B cell (primary cell): ENCODE measurements at regions of chrX and their contacts with region 1.

Region 1: GRCh38 chrX:100768679-100769338 is 36.9 kb upstream of the SYTL4 start:
- DNase-seq: peak; percentile 80
- ATAC-seq: peak; percentile 100
- H3K4me3 ChIP-seq: no peak overlapping the region
- H3K4me3 Mint-ChIP-seq: no peak overlapping the region
- H3K27ac ChIP-seq: no peak overlapping the region
- H3K27ac Mint-ChIP-seq: no peak overlapping the region
- H3K4me1 ChIP-seq: no peaks in the 10 kb centered on the region
- H3K4me1 Mint-ChIP-seq: no peaks in the 10 kb centered on the region
- H3K27me3 ChIP-seq: peaks cover 0 to 2% (median 0%) of the 10 kb centered on the region in 4 experiments
- H3K27me3 Mint-ChIP-seq: peaks cover 9% of the 10 kb centered on the region
- CTCF ChIP-seq: peak; percentile 96

Region 2: GRCh38 chrX:99777912-99778311 is 990.9 kb before region 1 on chrX:
- CTCF ChIA-PET with region 1: no interaction called
- POLR2A ChIA-PET with region 1: no interaction called
- intact Hi-C with region 1: no loop called
- DNase-seq: no peak
- ATAC-seq: no peak
- H3K4me3 ChIP-seq: no peak overlapping the region
- H3K4me3 Mint-ChIP-seq: no peak overlapping the region
- H3K27ac ChIP-seq: no peak overlapping the region
- H3K27ac Mint-ChIP-seq: no peak overlapping the region
- H3K4me1 ChIP-seq: no peaks in the 10 kb centered on the region
- H3K4me1 Mint-ChIP-seq: no peaks in the 10 kb centered on the region
- H3K27me3 ChIP-seq: no peaks in the 10 kb centered on the region
- H3K27me3 Mint-ChIP-seq: no peaks in the 10 kb centered on the region
- CTCF ChIP-seq: no peak

Region 3: DNA sequence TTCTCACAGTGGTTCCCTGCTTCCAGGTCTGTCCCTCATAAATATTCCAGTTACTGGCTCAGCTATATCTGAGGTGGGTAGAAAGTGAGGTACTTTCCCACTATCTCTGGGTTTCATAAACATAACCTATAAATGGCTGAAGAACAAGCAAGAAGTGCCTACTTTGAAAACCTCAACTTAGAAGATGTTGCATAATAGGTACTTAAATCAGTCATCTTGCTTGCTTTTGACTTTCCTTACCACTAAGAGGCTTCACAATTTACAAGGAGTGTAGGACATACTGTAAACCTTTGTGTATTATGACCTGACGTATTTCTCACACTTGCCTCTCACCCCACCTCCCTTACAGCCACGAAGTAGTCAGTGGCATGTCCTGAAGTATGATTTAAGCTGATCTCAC is 504.6 kb before region 1 on chrX:
- CTCF ChIA-PET with region 1: no interaction called
- POLR2A ChIA-PET with region 1: no interaction called
- intact Hi-C with region 1: no loop called
- DNase-seq: no peak
- ATAC-seq: no peak
- H3K4me3 ChIP-seq: no peak overlapping the region
- H3K4me3 Mint-ChIP-seq: no peak overlapping the region
- H3K27ac ChIP-seq: no peak overlapping the region
- H3K27ac Mint-ChIP-seq: no peak overlapping the region
- H3K4me1 ChIP-seq: no peaks in the 10 kb centered on the region
- H3K4me1 Mint-ChIP-seq: no peaks in the 10 kb centered on the region
- H3K27me3 ChIP-seq: no peaks in the 10 kb centered on the region
- H3K27me3 Mint-ChIP-seq: no peaks in the 10 kb centered on the region
- CTCF ChIP-seq: no peak

Region 4: DNA sequence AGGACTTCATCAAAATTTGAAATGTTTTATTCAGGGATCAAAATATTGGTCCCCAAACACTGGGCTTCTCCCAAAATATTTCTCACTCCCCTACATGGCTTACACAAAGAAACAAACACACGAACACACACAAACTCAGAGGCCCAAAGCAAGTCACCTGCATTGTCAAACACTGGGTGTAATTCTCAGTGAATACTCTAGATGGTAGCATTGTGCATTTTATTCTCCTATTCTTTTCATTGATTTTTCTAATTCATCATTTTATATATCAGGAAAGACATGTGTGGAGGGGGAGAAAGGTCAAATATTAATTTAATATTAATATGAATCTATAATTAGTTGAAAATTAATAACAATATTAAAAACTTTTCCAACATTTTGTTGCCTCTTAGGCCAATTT is 256.3 kb before region 1 on chrX:
- CTCF ChIA-PET with region 1: interaction called, 24 read pairs
- POLR2A ChIA-PET with region 1: no interaction called
- intact Hi-C with region 1: no loop called
- DNase-seq: peak; percentile 31
- ATAC-seq: no peak
- H3K4me3 ChIP-seq: no peak overlapping the region
- H3K4me3 Mint-ChIP-seq: no peak overlapping the region
- H3K27ac ChIP-seq: no peak overlapping the region
- H3K27ac Mint-ChIP-seq: no peak overlapping the region
- H3K4me1 ChIP-seq: no peaks in the 10 kb centered on the region
- H3K4me1 Mint-ChIP-seq: no peaks in the 10 kb centered on the region
- H3K27me3 ChIP-seq: no peaks in the 10 kb centered on the region
- H3K27me3 Mint-ChIP-seq: peaks cover 3% of the 10 kb centered on the region
- CTCF ChIP-seq: peak; percentile 82

Region 5: GRCh38 chrX:100674705-100675104 is 94.1 kb before region 1 on chrX:
- CTCF ChIA-PET with region 1: interaction called, 60 read pairs
- POLR2A ChIA-PET with region 1: no interaction called
- intact Hi-C with region 1: no loop called
- DNase-seq: peak; percentile 29
- ATAC-seq: peak; percentile 33
- H3K4me3 ChIP-seq: no peak overlapping the region
- H3K4me3 Mint-ChIP-seq: no peak overlapping the region
- H3K27ac ChIP-seq: no peak overlapping the region
- H3K27ac Mint-ChIP-seq: no peak overlapping the region
- H3K4me1 ChIP-seq: peaks cover 16% of the 10 kb centered on the region in 2 donors
- H3K4me1 Mint-ChIP-seq: peaks cover 13% of the 10 kb centered on the region
- H3K27me3 ChIP-seq: peaks cover 0 to 2% (median 0%) of the 10 kb centered on the region in 4 experiments
- H3K27me3 Mint-ChIP-seq: no peaks in the 10 kb centered on the region
- CTCF ChIP-seq: no peak

Region 6: DNA sequence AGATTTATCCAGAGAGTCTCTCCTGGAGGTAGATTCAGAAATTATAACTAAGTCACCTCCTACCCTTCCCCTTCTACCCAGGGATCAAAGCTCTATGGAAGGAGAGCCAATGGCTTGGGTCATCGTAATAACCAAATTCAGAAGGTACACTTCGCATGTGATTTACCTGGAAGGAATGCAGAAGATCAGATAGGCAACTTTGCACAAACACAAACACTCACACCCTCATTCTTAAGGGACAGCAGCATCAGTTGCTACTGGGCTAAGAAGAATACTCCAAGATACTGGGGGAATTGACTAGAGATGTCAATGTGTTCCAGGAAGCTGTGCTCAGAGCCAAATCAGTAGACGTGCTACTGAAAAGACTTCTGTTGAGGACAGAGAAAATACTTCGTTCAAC is 78.2 kb before region 1 on chrX:
- CTCF ChIA-PET with region 1: interaction called, 171 read pairs
- POLR2A ChIA-PET with region 1: no interaction called
- intact Hi-C with region 1: loop called (anchors 1 kb)
- DNase-seq: no peak
- ATAC-seq: no peak
- H3K4me3 ChIP-seq: no peak overlapping the region
- H3K4me3 Mint-ChIP-seq: no peak overlapping the region
- H3K27ac ChIP-seq: no peak overlapping the region
- H3K27ac Mint-ChIP-seq: no peak overlapping the region
- H3K4me1 ChIP-seq: peaks cover 26 to 28% of the 10 kb centered on the region in 2 donors
- H3K4me1 Mint-ChIP-seq: peaks cover 28% of the 10 kb centered on the region
- H3K27me3 ChIP-seq: no peaks in the 10 kb centered on the region
- H3K27me3 Mint-ChIP-seq: no peaks in the 10 kb centered on the region
- CTCF ChIP-seq: no peak

Region 7: DNA sequence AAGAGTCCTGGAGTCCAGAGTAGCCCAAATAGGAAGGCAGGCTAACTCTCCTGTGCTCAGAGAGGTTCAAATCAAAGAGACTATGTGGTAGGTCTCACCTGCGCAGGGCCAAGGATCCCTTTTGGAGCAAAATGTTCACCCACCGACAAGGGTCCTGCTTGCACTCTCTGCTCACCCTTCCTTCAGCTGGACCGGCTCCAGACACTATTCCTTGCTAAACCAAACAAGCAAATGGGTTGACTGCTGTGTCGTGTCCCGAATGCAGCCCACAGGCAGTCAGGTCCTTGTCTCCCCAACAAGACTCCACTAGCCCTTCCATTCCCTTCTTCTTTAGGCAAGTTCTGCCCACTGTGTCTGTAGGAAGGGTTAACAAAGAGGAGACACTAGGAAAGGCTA is 282.3 kb after region 1 on chrX:
- CTCF ChIA-PET with region 1: no interaction called
- POLR2A ChIA-PET with region 1: no interaction called
- intact Hi-C with region 1: no loop called
- DNase-seq: no peak
- ATAC-seq: no peak
- H3K4me3 ChIP-seq: peak overlapping the region; percentile 56 to 85 (median 76)
- H3K4me3 Mint-ChIP-seq: peak overlapping the region; percentile 86
- H3K27ac ChIP-seq: peak overlapping the region; percentile 59 to 86
- H3K27ac Mint-ChIP-seq: peak overlapping the region; percentile 93
- H3K4me1 ChIP-seq: peaks cover 7 to 13% of the 10 kb centered on the region in 2 donors
- H3K4me1 Mint-ChIP-seq: peaks cover 24% of the 10 kb centered on the region
- H3K27me3 ChIP-seq: no peaks in the 10 kb centered on the region
- H3K27me3 Mint-ChIP-seq: no peaks in the 10 kb centered on the region
- CTCF ChIP-seq: no peak